Activated naive CD4-positive, alpha-beta T cell treated with anti-CD3 and anti-CD28 coated beads for 36 hours (primary cell): ENCODE measurements at regions of chr19 and their contacts with region 1.

Region 1: DNA sequence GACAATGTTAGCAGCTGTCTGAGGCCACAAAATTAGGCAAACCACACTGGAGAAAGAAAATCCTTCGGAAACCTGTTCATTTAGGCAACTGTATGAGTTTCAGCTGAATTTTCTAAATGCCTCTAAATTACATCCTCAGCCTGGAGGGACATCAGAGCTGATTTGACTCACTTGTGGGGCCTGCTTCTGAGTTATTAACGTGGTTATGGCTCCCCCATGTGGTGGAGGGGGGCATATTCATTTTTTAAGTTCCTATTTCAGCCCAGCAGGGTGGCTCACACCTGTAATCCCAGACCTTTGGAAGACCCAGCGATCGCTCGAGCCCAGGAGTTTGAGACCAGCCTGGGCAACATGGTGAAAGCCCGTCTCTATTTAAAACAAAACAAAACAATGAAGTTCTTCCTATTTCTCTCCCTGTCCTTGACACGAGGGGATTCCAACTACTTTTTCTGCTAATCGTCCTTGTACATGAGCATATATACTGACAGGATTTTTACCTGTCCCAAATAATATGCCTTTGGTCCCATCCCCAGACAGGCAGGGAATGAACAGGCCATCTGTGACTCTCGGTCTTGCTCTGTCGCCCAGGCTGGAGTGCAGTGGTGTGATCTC is 31.5 kb upstream of the HIF3A start:
- DNase-seq: peak; percentile 86
- H3K4me3 Mint-ChIP-seq: no peak overlapping the region
- H3K27ac Mint-ChIP-seq: no peak overlapping the region
- H3K4me1 Mint-ChIP-seq: peaks cover 14% of the 10 kb centered on the region
- H3K27me3 Mint-ChIP-seq: peaks cover 27% of the 10 kb centered on the region

Region 2: GRCh38 chr19:45902651-45903625 is 362.4 kb before region 1 on chr19:
- CTCF ChIA-PET with region 1: no interaction called
- intact Hi-C with region 1: loop called (anchors 1 kb)
- DNase-seq: peak; percentile 99
- H3K4me3 Mint-ChIP-seq: peak overlapping the region; percentile 88
- H3K27ac Mint-ChIP-seq: peak overlapping the region; percentile 71
- H3K4me1 Mint-ChIP-seq: peaks cover 12% of the 10 kb centered on the region
- H3K27me3 Mint-ChIP-seq: no peaks in the 10 kb centered on the region

Region 3: GRCh38 chr19:46030812-46031550 is 234.3 kb before region 1 on chr19:
- CTCF ChIA-PET with region 1: interaction called, 43 read pairs
- intact Hi-C with region 1: loop called (anchors 1 kb)
- DNase-seq: no peak
- H3K4me3 Mint-ChIP-seq: no peak overlapping the region
- H3K27ac Mint-ChIP-seq: no peak overlapping the region
- H3K4me1 Mint-ChIP-seq: peaks cover 9% of the 10 kb centered on the region
- H3K27me3 Mint-ChIP-seq: peaks cover 3% of the 10 kb centered on the region

Region 4: DNA sequence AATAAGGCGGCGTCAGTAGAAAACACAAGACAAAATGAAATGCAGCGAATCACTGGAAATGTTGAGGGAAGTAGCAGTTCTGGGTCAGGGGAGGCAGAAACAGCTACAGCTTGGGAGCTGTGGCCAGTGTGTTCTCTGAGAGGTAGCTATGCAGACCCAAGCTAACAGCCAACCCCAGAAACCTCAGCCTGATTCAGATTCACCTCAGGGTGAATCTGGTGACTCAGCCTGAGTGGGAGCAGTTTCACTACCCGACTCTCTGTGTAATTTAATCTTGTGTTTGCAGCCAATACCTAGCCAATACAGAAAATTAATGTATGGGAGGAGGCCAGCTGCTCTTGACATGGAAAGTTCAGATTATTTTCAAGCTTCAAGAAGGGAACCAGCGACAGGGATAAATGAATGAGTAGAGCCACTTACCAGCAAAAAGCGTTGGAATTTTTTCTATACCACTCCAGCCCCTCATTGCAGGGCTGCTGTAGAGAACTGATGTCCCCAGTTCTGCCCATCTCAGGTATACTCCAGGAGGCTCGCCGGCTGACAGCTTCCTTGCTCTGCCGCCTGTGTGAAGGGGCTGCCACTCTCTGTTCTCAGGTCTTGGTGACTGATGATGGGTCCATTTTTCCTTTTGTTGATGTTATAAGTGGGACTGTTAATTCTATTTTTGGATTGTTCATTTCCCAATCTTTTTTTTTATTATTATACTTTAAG is 149.8 kb before region 1 on chr19:
- CTCF ChIA-PET with region 1: interaction called, 8 read pairs
- intact Hi-C with region 1: loop called (anchors 1 kb)
- DNase-seq: peak; percentile 85
- H3K4me3 Mint-ChIP-seq: no peak overlapping the region
- H3K27ac Mint-ChIP-seq: no peak overlapping the region
- H3K4me1 Mint-ChIP-seq: peaks cover 16% of the 10 kb centered on the region
- H3K27me3 Mint-ChIP-seq: peaks cover 47% of the 10 kb centered on the region

Region 5: DNA sequence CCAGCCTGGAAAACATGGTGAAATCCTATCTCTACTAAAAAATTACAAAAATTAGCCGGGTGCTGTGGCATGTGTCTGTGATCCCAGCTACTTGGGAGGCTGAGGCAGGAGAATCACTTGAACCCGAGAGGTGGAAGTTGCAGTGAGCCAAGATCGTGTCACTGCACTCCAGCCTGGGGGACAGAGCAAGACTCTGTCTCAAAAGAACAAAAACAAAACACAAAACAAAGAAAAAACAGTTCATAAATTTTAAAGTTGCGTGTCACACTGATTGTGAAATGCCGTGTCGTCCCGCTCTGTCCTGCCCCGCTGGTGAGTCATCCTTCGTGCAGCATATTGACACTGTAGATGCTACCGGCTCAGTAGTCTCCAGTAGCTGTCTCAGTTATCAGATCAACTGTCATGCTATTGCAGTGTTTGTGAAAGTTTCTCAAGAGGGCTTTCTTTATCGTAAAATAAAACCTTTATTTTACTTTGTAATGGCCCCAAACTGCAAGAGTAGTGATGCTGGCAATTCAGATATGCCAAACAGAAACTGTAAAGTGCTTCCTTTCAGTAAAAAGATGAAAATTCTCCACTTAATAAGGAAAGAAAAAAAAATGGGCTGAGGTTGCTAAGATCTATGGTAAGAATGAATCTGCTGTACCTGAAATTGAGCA is 72.2 kb before region 1 on chr19:
- CTCF ChIA-PET with region 1: interaction called, 5 read pairs
- intact Hi-C with region 1: loop called (anchors 1 kb)
- DNase-seq: no peak
- H3K4me3 Mint-ChIP-seq: no peak overlapping the region
- H3K27ac Mint-ChIP-seq: no peak overlapping the region
- H3K4me1 Mint-ChIP-seq: no peaks in the 10 kb centered on the region
- H3K27me3 Mint-ChIP-seq: peaks cover 51% of the 10 kb centered on the region

Region 6: GRCh38 chr19:46319613-46320012 is 54.3 kb after region 1 on chr19:
- CTCF ChIA-PET with region 1: no interaction called
- intact Hi-C with region 1: no loop called
- DNase-seq: no peak
- H3K4me3 Mint-ChIP-seq: no peak overlapping the region
- H3K27ac Mint-ChIP-seq: no peak overlapping the region
- H3K4me1 Mint-ChIP-seq: no peaks in the 10 kb centered on the region
- H3K27me3 Mint-ChIP-seq: no peaks in the 10 kb centered on the region